Right cardiac atrium (tissue), 5 donors: ENCODE measurements at regions of chr1 and their contacts with region 1.

Region 1: DNA sequence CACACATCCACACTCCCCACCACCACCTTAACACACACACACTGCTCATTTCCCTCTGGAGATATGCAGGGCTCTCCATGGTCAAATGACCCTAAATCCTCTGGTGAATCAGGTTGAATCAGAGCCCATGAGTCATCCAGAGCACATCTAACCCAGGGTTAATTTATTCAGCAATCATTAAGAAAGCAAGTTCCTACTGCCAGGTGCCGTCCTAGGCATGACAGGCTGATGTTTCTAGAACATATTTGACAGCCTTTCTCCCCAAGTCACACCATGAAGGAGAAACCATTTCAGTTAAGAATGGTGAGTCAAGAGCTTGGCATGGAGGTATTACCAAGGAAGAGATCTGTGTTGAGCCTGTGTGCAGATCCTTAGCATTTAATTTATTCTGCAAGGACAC is 194.3 kb upstream of the CAMK1G start:
- DNase-seq: no peak
- ATAC-seq: no peak
- H3K4me3 ChIP-seq: no peak overlapping the region
- H3K27ac ChIP-seq: no peak overlapping the region
- H3K4me1 ChIP-seq: no peaks in the 10 kb centered on the region
- H3K27me3 ChIP-seq: no peaks in the 10 kb centered on the region

Region 2: DNA sequence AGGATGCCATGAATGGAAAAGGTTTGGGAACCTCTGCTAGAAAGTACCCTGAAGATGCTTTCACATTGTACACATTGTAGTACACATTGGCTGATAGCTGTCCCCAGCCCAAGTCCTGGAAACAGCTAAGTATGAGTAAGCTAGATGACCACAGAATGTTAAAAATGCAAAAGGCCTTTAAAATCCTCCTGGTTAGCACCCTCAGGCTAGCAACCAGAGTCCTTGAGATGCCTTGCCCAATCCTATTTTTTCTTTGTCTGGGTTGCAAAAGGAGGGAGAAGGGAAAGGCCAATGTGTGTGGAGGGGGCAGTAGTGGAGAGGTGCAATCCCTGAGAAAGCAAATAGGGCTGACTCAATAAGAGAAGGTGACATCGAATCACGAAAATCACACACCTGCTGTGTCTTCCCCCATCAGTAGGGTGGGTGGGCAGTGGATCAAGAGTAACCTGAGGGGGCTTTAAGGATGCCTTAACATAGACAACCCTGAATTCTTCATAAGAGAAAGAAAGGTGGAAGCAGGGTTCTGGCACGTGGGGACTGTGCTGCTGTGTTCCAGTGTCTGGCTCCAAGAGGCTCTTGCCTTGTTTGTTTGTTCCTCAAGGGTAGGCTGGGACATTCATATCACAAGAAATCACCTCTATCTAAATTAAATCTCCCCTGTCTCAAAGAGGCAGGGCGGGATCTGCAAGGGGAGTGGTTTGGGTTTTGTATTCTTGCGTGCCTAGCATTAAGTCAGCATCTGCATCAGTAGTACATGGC is 878.9 kb before region 1 on chr1:
- intact Hi-C with region 1: loop called in 1 of 4 experiments (anchors 10 kb)
- DNase-seq: no peak
- ATAC-seq: no peak
- H3K4me3 ChIP-seq: no peak overlapping the region
- H3K27ac ChIP-seq: no peak overlapping the region
- H3K4me1 ChIP-seq: no peaks in the 10 kb centered on the region
- H3K27me3 ChIP-seq: no peaks in the 10 kb centered on the region

Region 3: DNA sequence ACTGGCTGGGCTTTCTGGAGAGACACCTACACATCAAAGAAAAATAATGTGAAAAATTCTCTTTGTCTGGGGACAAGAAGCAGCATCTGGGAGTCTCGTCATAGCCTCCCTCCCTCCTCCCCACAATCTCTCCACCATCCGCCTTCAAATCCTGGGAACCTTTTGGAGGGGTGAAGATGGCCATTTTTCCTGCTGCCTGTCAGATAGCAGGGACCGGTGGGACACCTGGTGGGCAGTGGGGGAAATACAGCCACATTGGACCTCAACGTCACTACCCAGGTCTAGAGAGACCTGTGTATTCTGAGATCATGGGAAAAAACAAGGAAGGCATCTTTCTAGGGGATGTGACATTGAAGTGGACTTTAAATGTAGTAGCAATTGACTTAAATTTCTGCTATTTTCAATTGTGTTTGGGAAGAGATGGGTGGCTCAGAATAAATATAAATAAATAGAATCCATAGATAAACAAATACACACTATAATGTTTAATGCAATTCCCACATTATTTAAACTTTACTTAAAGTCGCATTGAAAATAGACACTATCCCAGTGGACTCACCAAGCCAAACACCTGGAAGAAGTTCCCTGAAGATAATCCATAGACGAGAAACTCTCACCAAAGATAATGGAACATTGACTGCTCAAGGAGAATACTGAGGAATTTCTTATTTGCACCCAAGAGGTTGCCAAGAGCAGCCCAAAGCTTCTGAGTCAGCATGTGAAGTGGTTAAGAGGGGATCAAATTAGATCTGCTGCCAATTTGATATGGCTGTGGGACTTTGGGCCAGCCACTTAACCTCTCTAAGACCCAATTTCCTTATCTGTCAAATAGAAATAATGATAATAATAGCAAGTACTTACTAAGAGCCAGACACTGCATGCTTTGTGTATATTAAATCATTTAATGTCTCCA is 46.7 kb after region 1 on chr1:
- intact Hi-C with region 1: no loop called
- DNase-seq: peak; percentile 54 to 77 (median 74)
- ATAC-seq: peak; percentile 61 to 68
- H3K4me3 ChIP-seq: no peak overlapping the region
- H3K27ac ChIP-seq: no peak overlapping the region
- H3K4me1 ChIP-seq: no peaks in the 10 kb centered on the region
- H3K27me3 ChIP-seq: no peaks in the 10 kb centered on the region